MCF 10A (cell line): ENCODE measurements at regions of chr16 and their contacts with region 1.

Region 1: DNA sequence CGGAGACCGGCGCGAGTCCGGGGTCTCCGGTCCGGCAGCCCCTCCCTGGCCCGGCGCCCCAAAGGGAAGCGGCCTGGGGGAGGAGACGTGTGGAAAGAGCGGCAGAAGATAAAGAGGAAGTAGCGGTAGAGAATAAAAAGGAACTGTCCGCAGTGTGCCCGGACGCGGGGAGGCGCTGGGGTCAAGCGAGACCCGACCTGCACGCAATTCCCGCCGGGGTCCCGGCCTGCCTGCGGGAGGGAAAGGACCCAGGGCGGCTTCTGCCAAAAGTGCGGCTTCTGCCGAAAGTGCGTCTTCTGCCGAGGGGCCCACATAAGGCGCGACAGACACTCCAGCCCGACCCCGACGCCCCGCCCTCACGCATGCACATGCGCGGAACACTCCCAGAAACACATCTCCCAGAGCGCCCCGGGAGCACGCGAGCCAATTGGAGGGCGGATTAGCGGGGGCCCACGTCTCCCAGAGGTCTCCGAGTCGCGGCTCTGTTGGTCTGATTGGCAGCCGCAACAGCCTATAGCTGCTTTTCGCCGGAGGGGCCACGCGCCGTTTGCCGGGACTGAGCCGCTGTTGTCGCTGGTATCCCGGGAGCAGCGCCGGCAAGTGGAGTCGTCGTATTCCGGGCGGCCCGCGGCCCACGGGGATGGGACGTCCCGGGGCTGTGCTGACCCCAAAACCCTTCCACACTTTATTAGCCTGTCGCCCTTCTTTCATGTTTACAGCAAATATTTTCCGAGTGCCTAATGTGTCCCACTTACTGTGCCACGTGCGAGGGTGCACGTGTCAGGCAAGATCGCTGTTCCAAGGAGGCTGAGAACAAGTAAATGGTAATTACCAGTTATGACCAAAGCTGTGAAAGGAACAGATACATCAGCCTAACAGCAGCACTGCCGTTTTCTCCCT is 8.0 kb upstream of the MEFV start:
- DNase-seq: peak; percentile 98
- H3K4me3 Mint-ChIP-seq: peak overlapping the region; percentile 89
- H3K27ac Mint-ChIP-seq: peak overlapping the region; percentile 95
- H3K4me1 Mint-ChIP-seq: no peaks in the 10 kb centered on the region
- H3K27me3 Mint-ChIP-seq: no peaks in the 10 kb centered on the region
- CTCF ChIP-seq: peak; percentile 43

Region 2: GRCh38 chr16:3158471-3159314 is 105.7 kb before region 1 on chr16:
- CTCF ChIA-PET with region 1: no interaction called
- POLR2A ChIA-PET with region 1: interaction called, 12 read pairs
- intact Hi-C with region 1: no loop called
- DNase-seq: peak; percentile 95
- H3K4me3 Mint-ChIP-seq: peak overlapping the region; percentile 83
- H3K27ac Mint-ChIP-seq: peak overlapping the region; percentile 98
- H3K4me1 Mint-ChIP-seq: no peaks in the 10 kb centered on the region
- H3K27me3 Mint-ChIP-seq: no peaks in the 10 kb centered on the region
- CTCF ChIP-seq: no peak

Region 3: DNA sequence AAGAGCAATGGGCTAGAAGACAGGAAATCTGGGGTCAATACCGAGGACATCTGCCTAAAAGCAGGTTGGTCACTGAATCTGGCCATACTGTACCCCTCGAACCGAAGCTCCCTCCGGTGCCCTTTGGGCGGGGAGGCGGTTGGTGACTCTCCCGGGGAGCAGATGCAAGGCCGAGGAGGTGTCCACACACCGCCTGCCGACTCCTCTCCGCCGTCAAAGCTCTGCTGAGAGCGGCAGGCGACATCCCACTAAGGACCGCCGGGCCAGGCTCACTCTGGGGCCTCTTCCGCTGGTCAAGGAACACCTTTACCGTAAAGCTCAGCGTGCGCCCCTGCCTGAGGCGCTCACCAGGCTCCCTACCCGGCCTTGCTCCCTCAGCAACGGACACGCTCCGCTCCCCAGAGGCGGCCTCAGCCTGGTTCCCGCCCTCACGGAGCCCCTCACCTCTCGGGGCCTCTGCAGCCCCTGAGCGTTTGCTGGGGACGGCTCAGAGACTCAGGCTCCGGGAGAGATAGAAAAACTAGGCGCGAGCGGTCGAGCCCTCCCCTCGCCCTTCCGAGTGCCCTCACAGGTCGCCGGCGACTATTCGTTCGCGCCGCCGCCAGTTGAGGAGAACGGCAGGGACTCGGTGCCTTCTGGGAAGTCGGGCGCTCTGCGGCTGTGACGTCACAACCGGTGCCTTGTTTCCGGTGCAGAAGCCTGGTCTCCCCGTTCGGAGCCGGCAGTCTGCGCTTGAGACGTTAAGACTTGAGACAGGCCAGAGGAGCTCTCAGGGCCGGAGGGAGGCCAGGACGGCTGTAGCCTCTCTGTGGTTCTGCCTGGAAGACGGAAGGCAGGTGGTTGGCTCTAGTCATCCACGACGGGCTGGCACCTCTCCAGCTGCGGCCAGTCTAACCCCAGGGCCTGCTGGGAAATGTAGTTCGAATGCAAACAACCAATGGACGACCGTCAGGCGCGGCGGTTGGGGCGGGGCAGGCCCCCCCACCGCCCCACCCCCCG is 29.5 kb before region 1 on chr16 and contains the start of gene ZNF200:
- CTCF ChIA-PET with region 1: no interaction called
- POLR2A ChIA-PET with region 1: interaction called, 25 read pairs
- intact Hi-C with region 1: no loop called
- DNase-seq: peak; percentile 95
- H3K4me3 Mint-ChIP-seq: peak within 1 kb of the TSS; percentile 95
- H3K27ac Mint-ChIP-seq: peak within 1 kb of the TSS; percentile 96
- H3K4me1 Mint-ChIP-seq: peaks cover 4% of the 10 kb centered on the region
- H3K27me3 Mint-ChIP-seq: no peaks in the 10 kb centered on the region
- CTCF ChIP-seq: no peak
- total RNA-seq, gene ZNF200: 6.6 and 8.8 TPM in 2 replicates

Region 4: GRCh38 chr16:3276679-3277078 is 12.3 kb after region 1 on chr16:
- CTCF ChIA-PET with region 1: interaction called, 10 read pairs
- POLR2A ChIA-PET with region 1: interaction called, 161 read pairs
- intact Hi-C with region 1: no loop called
- DNase-seq: no peak
- H3K4me3 Mint-ChIP-seq: no peak overlapping the region
- H3K27ac Mint-ChIP-seq: no peak overlapping the region
- H3K4me1 Mint-ChIP-seq: no peaks in the 10 kb centered on the region
- H3K27me3 Mint-ChIP-seq: no peaks in the 10 kb centered on the region
- CTCF ChIP-seq: no peak

Region 5: GRCh38 chr16:3400779-3401688 is 136.6 kb after region 1 on chr16 and contains the starts of genes ZNF174 and ZSCAN32:
- CTCF ChIA-PET with region 1: no interaction called
- POLR2A ChIA-PET with region 1: interaction called, 28 read pairs
- intact Hi-C with region 1: no loop called
- DNase-seq: peak; percentile 99
- H3K4me3 Mint-ChIP-seq: peak within 1 kb of the TSS; percentile 92
- H3K27ac Mint-ChIP-seq: peak within 1 kb of the TSS; percentile 91
- H3K4me1 Mint-ChIP-seq: peaks cover 11% of the 10 kb centered on the region
- H3K27me3 Mint-ChIP-seq: no peaks in the 10 kb centered on the region
- CTCF ChIP-seq: no peak
- total RNA-seq, gene ZNF174: 7.5 and 8.9 TPM in 2 replicates
- total RNA-seq, gene ZSCAN32: 17.5 and 18.1 TPM in 2 replicates

Region 6: GRCh38 chr16:3457434-3458252 is 193.3 kb after region 1 on chr16:
- CTCF ChIA-PET with region 1: interaction called, 3 read pairs
- POLR2A ChIA-PET with region 1: interaction called, 7 read pairs
- intact Hi-C with region 1: loop called (anchors 5 kb)
- DNase-seq: peak; percentile 87
- H3K4me3 Mint-ChIP-seq: peak overlapping the region; percentile 84
- H3K27ac Mint-ChIP-seq: peak overlapping the region; percentile 75
- H3K4me1 Mint-ChIP-seq: peaks cover 31% of the 10 kb centered on the region
- H3K27me3 Mint-ChIP-seq: no peaks in the 10 kb centered on the region
- CTCF ChIP-seq: peak; percentile 34